Cardiac septum (tissue), 1 donor: ENCODE measurements at regions of chr12 and their contacts with region 1.

Region 1: DNA sequence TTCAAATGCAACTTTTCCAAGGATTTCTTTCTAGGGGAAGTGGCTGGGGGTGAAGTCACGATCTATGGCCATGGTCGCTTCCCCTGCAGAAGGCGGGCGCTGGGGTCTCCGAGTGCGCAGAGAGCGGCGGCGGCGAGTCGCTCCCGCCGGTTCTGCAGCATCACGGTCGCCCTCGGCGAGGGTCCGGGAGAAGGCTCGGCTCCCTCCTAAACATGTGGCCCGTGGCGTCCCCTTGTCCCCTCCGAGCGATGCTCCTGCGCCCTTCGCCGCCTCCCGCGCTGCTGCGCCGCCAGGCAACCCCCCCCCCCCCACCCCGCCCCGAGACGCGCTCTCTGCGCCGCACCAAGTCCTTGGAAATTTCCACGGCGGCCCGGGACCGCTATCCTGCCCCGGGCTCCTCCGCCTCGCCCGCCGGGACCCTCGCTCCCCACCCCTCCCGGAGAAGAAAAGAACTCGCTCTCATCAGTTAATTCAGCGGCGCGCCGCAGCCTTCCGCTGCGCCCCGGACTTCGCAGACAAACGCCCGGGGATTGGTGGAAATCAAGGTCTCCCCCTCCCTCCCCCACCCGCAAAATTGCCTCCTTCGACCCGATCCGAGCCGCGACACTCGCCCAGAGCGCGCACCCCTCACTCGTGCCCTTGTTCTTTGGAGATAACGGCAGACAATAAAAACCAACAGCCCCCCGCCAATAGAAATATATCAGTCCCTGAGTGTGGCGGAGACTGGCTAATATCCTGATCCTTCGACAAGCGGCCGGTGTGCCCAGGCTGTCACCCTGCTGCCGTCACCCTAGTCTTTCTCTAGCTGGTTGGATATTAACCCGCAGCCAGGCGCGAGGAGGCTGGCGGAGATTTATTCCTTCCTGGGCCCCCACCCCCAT is at the start of gene ST8SIA1:
- DNase-seq: no peak
- total RNA-seq, gene ST8SIA1: 1.5 TPM

Region 2: DNA sequence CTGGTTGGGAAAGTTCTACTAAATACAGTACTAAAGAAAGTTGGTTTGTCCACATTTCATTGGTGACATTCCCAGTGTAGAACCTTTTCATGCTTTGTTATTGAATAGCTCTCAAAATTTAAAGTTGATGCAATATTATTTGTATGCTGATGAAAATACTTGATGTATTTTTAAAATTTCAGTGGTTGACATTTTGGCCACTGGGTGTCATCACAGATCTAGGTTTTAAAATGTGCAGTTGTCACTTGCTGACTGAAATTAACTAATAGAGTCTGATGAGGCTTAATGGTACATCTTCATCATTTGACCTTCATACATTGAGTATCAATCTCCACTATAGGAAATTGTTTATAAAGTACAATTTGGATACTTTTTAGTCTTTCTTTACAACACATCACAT is 251.5 kb before region 1 on chr12:
- intact Hi-C with region 1: loop called (anchors 5 kb)
- DNase-seq: no peak

Region 3: GRCh38 chr12:22100958-22101748 is 233.5 kb before region 1 on chr12:
- intact Hi-C with region 1: loop called (anchors 1 kb)
- DNase-seq: no peak

Region 4: GRCh38 chr12:22443379-22444316 is 109.0 kb after region 1 on chr12:
- intact Hi-C with region 1: loop called (anchors 5 kb)
- DNase-seq: peak; percentile 76

Region 5: GRCh38 chr12:22527999-22528398 is 193.3 kb after region 1 on chr12:
- intact Hi-C with region 1: no loop called
- DNase-seq: no peak